Aorta (tissue), 5 donors: ENCODE measurements at regions of chr15 and their contacts with region 1.

Region 1: DNA sequence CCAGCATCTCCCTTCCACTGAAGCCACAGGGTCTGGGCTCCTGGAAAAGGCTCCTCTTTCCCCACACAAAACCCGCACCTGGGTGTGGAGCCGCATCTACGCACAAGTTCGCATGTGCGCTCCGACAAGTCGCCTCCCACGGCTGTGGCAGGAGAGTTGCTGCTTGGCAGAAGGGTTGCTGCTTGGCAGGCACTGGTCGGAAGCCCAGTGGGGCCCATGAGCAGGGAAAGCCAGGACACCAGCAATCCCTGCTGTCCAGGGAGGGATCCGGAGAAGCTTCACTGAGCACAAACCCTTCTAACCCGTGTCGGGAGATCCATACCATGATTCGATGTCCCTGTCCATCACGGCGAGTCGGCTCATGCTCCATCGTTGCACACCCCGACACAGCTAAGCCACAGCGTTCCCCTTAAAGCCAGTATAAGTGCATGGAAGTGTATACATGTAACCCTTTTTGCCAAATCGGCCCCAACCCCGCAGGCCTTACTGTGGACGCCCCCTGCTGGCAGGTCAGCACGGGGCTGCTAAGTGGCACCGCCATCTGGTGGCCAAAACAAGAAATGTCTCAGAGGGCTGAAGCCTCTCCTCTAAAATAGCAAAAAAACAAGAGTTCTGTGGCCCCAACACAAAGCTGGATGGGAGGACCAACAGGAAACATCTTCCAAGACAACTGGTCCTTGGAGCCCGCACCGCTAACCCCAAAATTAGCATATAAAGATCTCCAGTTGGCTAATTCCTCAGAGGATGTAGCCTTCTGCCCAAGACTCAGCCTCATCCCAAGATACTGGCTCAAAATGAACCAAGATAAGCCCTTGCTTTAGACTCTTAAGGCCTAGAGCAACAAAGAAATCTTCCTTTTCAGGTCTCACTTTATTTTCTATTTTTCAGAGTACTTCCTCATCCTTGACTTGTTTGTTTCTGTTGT is 8.3 kb downstream of the ANKRD63 start:
- DNase-seq: peak; percentile 88 to 92
- ATAC-seq: peak; percentile 78
- H3K4me3 ChIP-seq: no peak overlapping the region
- H3K27ac ChIP-seq: no peak overlapping the region
- H3K4me1 ChIP-seq: no peaks in the 10 kb centered on the region
- H3K27me3 ChIP-seq: no peaks in the 10 kb centered on the region

Region 2: GRCh38 chr15:40044717-40045571 is 229.7 kb before region 1 on chr15:
- intact Hi-C with region 1: loop called (anchors 2 kb)
- DNase-seq: peak; percentile 94 to 95
- ATAC-seq: peak; percentile 93
- H3K4me3 ChIP-seq: no peak overlapping the region
- H3K27ac ChIP-seq: no peak overlapping the region
- H3K4me1 ChIP-seq: no peaks in the 10 kb centered on the region
- H3K27me3 ChIP-seq: no peaks in the 10 kb centered on the region

Region 3: GRCh38 chr15:40217159-40217824 is 57.3 kb before region 1 on chr15:
- intact Hi-C with region 1: loop called (anchors 1 to 2 kb)
- DNase-seq: no peak
- ATAC-seq: peak; percentile 86
- H3K4me3 ChIP-seq: no peak overlapping the region
- H3K27ac ChIP-seq: no peak overlapping the region
- H3K4me1 ChIP-seq: no peaks in the 10 kb centered on the region
- H3K27me3 ChIP-seq: no peaks in the 10 kb centered on the region

Region 4: GRCh38 chr15:40238532-40239403 is 35.8 kb before region 1 on chr15 and contains the start of gene PAK6:
- intact Hi-C with region 1: loop called in 1 of 2 experiments (anchors 1 kb)
- DNase-seq: peak in 1 of 2 donors; percentile 66
- ATAC-seq: peak; percentile 62
- H3K4me3 ChIP-seq: no peak within 1 kb of the TSS
- H3K27ac ChIP-seq: no peak within 1 kb of the TSS
- H3K4me1 ChIP-seq: no peaks in the 10 kb centered on the region
- H3K27me3 ChIP-seq: no peaks in the 10 kb centered on the region
- total RNA-seq, gene PAK6: 0.81 to 0.91 TPM

Region 5: DNA sequence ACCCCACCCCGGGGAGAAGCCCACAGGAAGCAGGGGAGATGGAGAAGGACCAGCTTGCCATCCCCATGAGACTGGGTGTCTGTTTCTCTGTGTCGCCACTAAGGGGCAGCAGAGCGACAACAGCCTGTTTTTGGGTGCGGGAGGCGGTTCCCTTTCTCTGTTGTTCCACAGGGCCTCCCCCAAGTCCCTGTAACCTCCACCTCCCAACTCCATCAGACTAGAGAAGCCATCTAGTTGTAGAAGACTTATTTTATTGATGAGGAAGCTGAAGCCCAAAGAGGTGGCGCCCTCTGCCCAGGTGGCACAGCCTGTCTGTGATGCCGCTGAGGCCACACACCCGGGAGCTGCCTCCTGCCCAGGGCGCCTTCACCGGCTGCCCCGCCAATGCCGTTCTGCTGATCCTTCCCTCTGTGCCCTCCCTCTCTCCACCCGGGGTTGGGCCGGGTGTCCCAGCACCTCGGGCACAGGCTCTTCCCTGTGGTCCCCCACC is 70.1 kb after region 1 on chr15:
- intact Hi-C with region 1: loop called in 1 of 2 experiments (anchors 5 kb)
- DNase-seq: peak; percentile 82 to 87
- ATAC-seq: no peak
- H3K4me3 ChIP-seq: no peak overlapping the region
- H3K27ac ChIP-seq: peak overlapping the region in 1 of 2 donors; percentile 89
- H3K4me1 ChIP-seq: peaks cover 0 to 3% of the 10 kb centered on the region in 2 donors
- H3K27me3 ChIP-seq: no peaks in the 10 kb centered on the region

Region 6: GRCh38 chr15:40367686-40368611 is 93.3 kb after region 1 on chr15:
- intact Hi-C with region 1: loop called in 1 of 2 experiments (anchors 5 kb)
- DNase-seq: peak; percentile 91 to 94
- ATAC-seq: peak; percentile 90
- H3K4me3 ChIP-seq: no peak overlapping the region
- H3K27ac ChIP-seq: no peak overlapping the region
- H3K4me1 ChIP-seq: no peaks in the 10 kb centered on the region
- H3K27me3 ChIP-seq: no peaks in the 10 kb centered on the region